ENCODE measurements at regions of chr1 and their contacts with region 1.

Region 1: GRCh38 chr1:29033829-29034466 is 89.8 kb downstream of the TMEM200B start:
- DNase-seq: no peak
- ATAC-seq: no peak
- H3K4me3 ChIP-seq: no peak overlapping the region
- H3K27ac ChIP-seq: no peak overlapping the region
- H3K4me1 ChIP-seq: no peaks in the 10 kb centered on the region
- H3K27me3 ChIP-seq: no peaks in the 10 kb centered on the region

Region 2: GRCh38 chr1:28779751-28780408 is 254.1 kb before region 1 on chr1:
- intact Hi-C with region 1: loop called (anchors 10 kb)
- DNase-seq: peak in 1 of 2 donors; percentile 36
- ATAC-seq: no peak
- H3K4me3 ChIP-seq: no peak overlapping the region
- H3K27ac ChIP-seq: no peak overlapping the region
- H3K4me1 ChIP-seq: no peaks in the 10 kb centered on the region
- H3K27me3 ChIP-seq: no peaks in the 10 kb centered on the region

Measured in aorta (tissue), 5 donors.